Dorsolateral prefrontal cortex (tissue), 120 donors: ENCODE measurements at regions of chr1 and their contacts with region 1.

Region 1: GRCh38 chr1:87131809-87132283 is 196.8 kb upstream of the LMO4 start:
- DNase-seq: peak; percentile 63 to 91 (median 78)
- H3K4me3 ChIP-seq: peak overlapping the region; percentile 22 to 67 (median 51)
- H3K27ac ChIP-seq: peak overlapping the region in 52 of 59 donors; percentile 11 to 91 (median 72)
- H3K27me3 ChIP-seq: no peaks in the 10 kb centered on the region
- CTCF ChIP-seq: peak; percentile 75 to 99 (median 96)

Region 2: GRCh38 chr1:86993269-86993985 is 138.4 kb before region 1 on chr1:
- intact Hi-C with region 1: no loop called
- DNase-seq: no peak
- H3K4me3 ChIP-seq: no peak overlapping the region
- H3K27ac ChIP-seq: no peak overlapping the region
- H3K27me3 ChIP-seq: no peaks in the 10 kb centered on the region
- CTCF ChIP-seq: no peak

Region 3: GRCh38 chr1:87058343-87058649 is 73.5 kb before region 1 on chr1:
- intact Hi-C with region 1: no loop called
- DNase-seq: no peak
- H3K4me3 ChIP-seq: no peak overlapping the region
- H3K27ac ChIP-seq: peak overlapping the region in 6 of 59 donors; percentile 5 to 37 (median 21)
- H3K27me3 ChIP-seq: no peaks in the 10 kb centered on the region
- CTCF ChIP-seq: no peak

Region 4: DNA sequence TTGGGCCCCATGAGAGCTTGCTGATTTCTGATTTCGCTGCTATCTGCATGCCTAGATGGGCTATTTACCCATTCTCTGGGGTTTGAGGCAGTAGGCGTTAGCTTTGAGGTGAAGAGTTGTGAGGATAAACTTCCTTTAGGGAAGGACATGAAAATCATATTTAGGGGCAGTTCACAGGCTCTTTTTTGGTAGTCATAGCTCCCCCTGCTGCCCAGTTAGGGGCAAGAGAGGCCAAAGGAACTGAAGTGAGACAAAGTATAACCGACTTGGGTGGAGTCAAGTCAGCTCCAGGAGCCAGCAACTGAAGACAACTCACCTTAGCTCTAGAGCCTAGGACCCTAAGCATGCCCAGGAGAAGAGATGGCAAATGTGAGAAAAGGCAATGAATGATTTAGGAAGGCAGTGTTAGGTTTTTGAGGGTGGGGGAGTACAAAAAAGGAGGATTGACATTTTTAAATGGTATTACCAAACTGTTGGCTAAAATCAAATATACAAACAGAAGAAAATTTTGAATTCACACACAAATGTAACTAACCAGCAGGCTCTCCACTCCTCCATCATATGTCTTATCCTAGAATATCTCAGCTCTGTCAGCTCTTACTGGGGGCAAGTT is 822.0 kb after region 1 on chr1:
- intact Hi-C with region 1: loop called (anchors 5 kb)
- DNase-seq: peak in 8 of 10 donors; percentile 25 to 71 (median 62)
- H3K4me3 ChIP-seq: no peak overlapping the region
- H3K27ac ChIP-seq: peak overlapping the region in 8 of 59 donors; percentile 3 to 46 (median 41)
- H3K27me3 ChIP-seq: no peaks in the 10 kb centered on the region
- CTCF ChIP-seq: peak; percentile 45 to 87 (median 76)